ENCODE measurements at regions of chr5 and their contacts with region 1.

Region 1: GRCh38 chr5:57298295-57298984 is 124.6 kb downstream of the GPBP1 start:
- DNase-seq: peak; percentile 85 to 86
- ATAC-seq: peak; percentile 93
- H3K4me3 ChIP-seq: no peak overlapping the region
- H3K27ac ChIP-seq: peak overlapping the region in 1 of 2 donors; percentile 30
- H3K4me1 ChIP-seq: peaks cover 0 to 3% of the 10 kb centered on the region in 2 donors
- H3K27me3 ChIP-seq: no peaks in the 10 kb centered on the region

Region 2: DNA sequence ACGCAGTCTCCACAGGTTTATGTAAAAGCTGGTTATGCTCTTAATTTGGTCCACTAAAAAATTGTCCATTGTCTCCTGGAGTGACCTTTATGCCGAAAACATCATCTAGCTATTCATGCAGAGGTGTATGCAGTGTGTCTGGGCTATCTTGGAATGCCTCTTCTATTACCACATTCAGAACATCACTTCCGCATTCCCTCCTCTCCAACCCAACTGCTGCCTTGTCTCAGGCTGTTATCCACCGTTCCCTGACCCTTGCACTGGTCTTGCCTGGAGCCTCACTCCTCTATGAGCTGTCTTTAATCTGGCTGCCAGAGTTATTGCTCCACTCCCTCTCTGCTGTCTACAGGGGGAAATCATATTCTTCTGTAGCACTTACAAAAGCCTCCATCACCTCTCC is 851.2 kb before region 1 on chr5:
- intact Hi-C with region 1: no loop called
- DNase-seq: no peak
- ATAC-seq: no peak
- H3K4me3 ChIP-seq: no peak overlapping the region
- H3K27ac ChIP-seq: no peak overlapping the region
- H3K4me1 ChIP-seq: no peaks in the 10 kb centered on the region
- H3K27me3 ChIP-seq: no peaks in the 10 kb centered on the region

Region 3: GRCh38 chr5:57007344-57007743 is 291.1 kb before region 1 on chr5:
- intact Hi-C with region 1: no loop called
- DNase-seq: no peak
- ATAC-seq: no peak
- H3K4me3 ChIP-seq: no peak overlapping the region
- H3K27ac ChIP-seq: no peak overlapping the region
- H3K4me1 ChIP-seq: no peaks in the 10 kb centered on the region
- H3K27me3 ChIP-seq: no peaks in the 10 kb centered on the region

Region 4: DNA sequence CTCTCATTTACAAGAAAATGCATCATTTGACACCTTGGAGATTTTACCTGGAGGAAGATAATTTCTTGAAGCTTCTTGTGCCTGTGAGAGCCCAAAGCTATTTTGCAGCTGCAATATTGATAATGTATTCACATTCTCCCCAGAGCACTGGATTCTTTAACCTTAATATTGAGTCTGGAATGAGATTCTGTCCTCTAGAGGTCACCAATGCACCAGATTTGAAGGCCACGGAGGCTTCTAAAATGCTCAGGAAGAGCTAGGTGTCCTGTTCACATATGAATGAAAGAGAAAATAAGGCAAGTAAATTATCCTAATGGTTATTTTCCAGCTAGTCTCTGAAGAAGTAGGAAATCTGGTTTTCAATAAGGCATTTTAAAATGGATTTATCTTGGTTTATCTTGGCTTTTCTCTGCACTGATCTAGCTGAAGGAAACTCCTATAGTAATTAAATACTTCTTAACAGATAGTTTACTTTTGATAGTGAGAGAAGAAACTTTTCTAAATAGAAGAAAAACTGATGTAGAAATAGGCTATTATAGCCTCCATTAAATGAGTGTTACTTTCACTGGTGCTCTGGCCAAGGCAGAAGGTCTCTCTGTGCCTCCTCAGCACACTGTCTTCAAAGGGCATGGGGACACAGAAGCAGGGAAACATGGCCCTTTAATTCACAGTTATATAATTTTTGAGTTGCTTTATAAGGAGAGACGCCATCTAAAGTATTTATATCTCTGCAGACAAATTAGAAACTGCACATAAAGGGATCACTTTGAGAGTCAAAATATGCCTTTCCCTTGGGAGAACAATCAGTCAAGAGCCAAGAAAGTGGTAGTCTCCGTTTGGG is 481.2 kb after region 1 on chr5:
- intact Hi-C with region 1: loop called (anchors 5 kb)
- DNase-seq: no peak
- ATAC-seq: peak; percentile 81
- H3K4me3 ChIP-seq: no peak overlapping the region
- H3K27ac ChIP-seq: no peak overlapping the region
- H3K4me1 ChIP-seq: peaks cover 2 to 7% of the 10 kb centered on the region in 2 donors
- H3K27me3 ChIP-seq: no peaks in the 10 kb centered on the region